ENCODE measurements at regions of chr9 and their contacts with region 1.

Region 1: DNA sequence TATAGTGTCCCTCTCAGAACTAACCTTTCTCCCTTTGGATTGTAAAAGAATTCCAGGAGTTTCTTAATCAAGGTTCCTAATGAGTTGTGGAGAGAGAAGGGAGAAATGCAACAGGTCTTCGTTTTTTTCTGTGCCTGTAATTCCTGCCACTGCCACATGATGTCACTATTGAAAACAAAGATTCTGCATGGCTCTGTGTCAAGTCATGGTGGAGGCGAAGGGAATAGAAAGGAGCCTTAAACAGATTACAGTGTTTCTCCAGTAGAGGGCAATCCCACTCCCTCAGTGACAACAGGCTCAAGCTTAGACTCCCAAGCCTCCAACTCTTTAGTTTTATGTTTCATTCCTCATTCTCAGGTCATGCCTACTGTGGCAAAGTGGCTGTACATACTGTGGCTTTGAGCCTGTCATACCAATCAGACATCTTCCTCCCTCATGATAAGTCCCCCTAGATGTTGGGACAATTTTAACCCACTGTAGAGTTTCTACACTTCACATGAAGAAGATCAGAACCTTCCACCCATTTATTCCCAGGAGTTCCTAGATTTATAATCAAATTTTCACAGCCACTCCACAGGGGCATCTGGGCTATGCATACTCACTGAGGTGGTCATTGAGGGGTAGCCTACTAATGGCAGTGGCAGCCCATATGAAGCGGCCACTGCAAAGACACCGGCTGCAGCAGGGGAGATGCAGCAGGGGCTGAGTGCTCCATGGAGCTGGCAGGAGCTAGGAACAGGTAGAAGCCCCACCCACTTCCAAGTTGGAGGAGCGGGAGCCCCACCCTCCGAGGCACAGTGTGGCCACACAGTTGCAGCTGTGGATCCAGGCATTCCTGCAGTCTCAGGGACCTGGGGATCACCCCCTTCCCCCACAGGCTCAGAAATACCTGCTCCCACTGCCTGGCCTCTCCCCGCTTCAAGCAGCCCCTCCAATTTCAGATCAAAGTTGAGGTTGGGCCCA is 97.4 kb upstream of the TRIM32 start:
- DNase-seq: no peak
- H3K4me3 ChIP-seq: no peak overlapping the region
- H3K27ac ChIP-seq: no peak overlapping the region
- H3K4me1 ChIP-seq: no peaks in the 10 kb centered on the region
- H3K27me3 ChIP-seq: no peaks in the 10 kb centered on the region
- CTCF ChIP-seq: peak in 2 of 4 experiments; percentile 14 to 44
- EP300 ChIP-seq: no peak
- POLR2A ChIP-seq: no peak

Region 2: GRCh38 chr9:116075191-116075590 is 514.5 kb before region 1 on chr9:
- intact Hi-C with region 1: loop called (anchors 5 kb)
- DNase-seq: no peak
- H3K4me3 ChIP-seq: no peak overlapping the region
- H3K27ac ChIP-seq: no peak overlapping the region
- H3K4me1 ChIP-seq: no peaks in the 10 kb centered on the region
- H3K27me3 ChIP-seq: no peaks in the 10 kb centered on the region
- CTCF ChIP-seq: no peak
- EP300 ChIP-seq: no peak
- POLR2A ChIP-seq: no peak

Measured in sigmoid colon (tissue), 7 donors.